Astrocyte of the cerebellum (primary cell): ENCODE measurements at regions of chr7 and their contacts with region 1.

Region 1: DNA sequence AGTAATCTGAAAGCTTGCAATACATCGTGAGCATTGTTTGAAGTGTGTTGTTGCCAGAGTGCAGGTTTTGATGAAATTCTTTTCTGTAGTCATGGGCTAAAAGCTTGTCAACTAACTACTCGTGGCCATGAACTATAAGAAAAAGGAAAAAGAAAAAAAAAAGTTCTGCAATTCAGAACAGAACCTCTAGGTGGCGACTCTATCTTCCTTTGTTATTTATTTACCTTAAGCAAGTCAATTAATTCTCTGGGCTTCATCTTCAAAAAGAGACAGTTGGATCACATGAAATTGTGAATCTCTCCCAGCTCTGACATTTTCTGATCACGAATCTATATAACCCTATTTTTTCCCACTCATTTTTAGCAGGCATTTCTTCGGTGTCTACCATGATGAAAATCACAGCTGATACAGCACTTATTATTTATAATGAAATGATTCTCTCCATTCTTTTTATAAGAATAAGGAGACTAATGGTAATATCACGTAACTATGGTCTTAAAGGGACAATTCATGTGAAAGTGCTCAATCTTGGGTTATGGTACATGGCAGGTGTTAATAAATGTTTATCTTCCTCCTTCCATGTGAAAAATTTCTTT is 18.8 kb downstream of the TMEM196 start:
- DNase-seq: peak; percentile 19
- H3K4me3 ChIP-seq: no peak overlapping the region
- CTCF ChIP-seq: peak; percentile 53

Region 2: DNA sequence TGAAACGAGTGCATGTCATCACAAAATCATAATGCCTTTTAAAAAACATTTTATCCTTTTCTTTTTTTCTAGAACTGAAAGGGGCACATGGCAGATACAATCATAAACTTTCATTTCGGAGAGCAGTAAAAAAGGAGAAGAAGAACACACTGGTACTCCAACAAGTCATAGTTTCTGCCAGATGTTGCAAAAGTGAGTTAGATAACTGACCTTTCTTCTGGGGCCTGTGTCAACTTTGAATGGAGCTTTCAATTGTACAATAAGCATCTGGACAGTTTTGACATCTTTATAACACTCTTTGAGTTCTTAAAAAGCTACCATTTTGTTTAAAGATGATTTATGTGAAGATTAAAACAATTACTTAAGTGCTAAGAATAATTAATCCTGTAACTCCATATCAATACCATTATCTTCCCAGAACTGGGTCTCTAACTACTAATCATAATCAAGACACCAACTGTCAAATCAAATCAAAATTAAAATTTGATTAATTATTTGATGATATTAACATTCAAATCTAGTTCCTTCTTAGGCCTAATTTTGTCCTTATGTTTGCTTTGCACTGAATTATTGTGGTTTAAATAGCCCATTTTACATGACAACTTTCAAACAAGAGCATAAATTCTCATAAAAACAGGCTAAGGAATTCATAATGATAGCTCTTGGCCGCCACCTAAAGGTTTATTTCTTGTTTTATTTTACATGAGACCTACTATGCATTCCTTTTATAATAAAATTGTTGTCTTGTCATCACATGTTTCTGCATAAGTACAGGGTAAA is 556.5 kb after region 1 on chr7:
- in situ Hi-C with region 1: loop called (anchors 25 kb)
- DNase-seq: no peak
- H3K4me3 ChIP-seq: no peak overlapping the region
- CTCF ChIP-seq: peak; percentile 2

Region 3: GRCh38 chr7:20598459-20599309 is 844.1 kb after region 1 on chr7:
- in situ Hi-C with region 1: loop called (anchors 25 kb)
- DNase-seq: peak; percentile 55
- H3K4me3 ChIP-seq: no peak overlapping the region
- CTCF ChIP-seq: peak; percentile 62